Activated CD8-positive, alpha-beta memory T cell treated with anti-CD3 and anti-CD28 coated beads, Interleukin-2, amount 10 ng/mL, durations not matched to agents 7 days and 5 days (primary cell): ENCODE measurements at regions of chr9 and their contacts with region 1.

Region 1: GRCh38 chr9:85741875-85742629 is at the start of gene AGTPBP1:
- DNase-seq: peak; percentile 96
- ATAC-seq: peak; percentile 86
- H3K4me3 Mint-ChIP-seq: peak within 1 kb of the TSS; percentile 95
- H3K27ac Mint-ChIP-seq: peak within 1 kb of the TSS; percentile 95
- H3K4me1 Mint-ChIP-seq: peaks cover 51% of the 10 kb centered on the region
- H3K27me3 Mint-ChIP-seq: peaks cover 2% of the 10 kb centered on the region
- total RNA-seq, gene AGTPBP1: 22.9 to 30.8 TPM

Region 2: GRCh38 chr9:85702726-85703289 is 39.2 kb before region 1 on chr9:
- CTCF ChIA-PET with region 1: interaction called, 11 read pairs
- DNase-seq: no peak
- ATAC-seq: no peak
- H3K4me3 Mint-ChIP-seq: no peak overlapping the region
- H3K27ac Mint-ChIP-seq: no peak overlapping the region
- H3K4me1 Mint-ChIP-seq: peaks cover 17% of the 10 kb centered on the region
- H3K27me3 Mint-ChIP-seq: no peaks in the 10 kb centered on the region